CD14-positive monocyte (primary cell): ENCODE measurements at regions of chr16 and their contacts with region 1.

Region 1: DNA sequence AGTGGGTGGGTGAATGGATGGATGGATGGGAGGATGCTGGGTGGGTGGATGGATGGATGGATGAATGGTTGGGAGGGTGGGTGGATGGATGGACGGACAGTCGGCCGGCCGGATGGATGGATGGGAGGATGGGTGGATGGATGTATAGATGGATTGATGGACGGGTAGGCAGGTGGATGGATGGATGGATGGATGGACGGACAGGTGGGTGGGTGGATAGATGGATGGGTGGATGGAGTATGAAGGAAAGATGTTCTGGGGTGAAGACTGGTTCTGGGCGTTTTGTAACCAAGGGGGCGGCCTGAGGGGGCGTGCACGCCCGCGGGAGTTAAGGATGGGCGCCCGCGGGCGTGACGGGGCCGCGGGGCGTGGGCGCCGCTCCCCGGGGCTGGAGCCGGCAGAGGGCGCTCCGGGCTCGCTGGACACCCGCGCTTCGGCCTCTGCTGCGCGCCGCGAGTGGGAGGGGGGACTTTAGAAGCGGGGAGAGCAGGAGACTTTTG is at the start of gene NECAB2:
- DNase-seq: peak; percentile 43 to 64 (median 48)
- H3K4me3 ChIP-seq: no peak within 1 kb of the TSS
- H3K4me3 Mint-ChIP-seq: peak within 1 kb of the TSS; percentile 53 to 82
- H3K27ac ChIP-seq: no peak within 1 kb of the TSS
- H3K27ac Mint-ChIP-seq: peak within 1 kb of the TSS in 1 of 7 donors; percentile 3
- H3K4me1 ChIP-seq: no peaks in the 10 kb centered on the region
- H3K4me1 Mint-ChIP-seq: peaks cover 2% of the 10 kb centered on the region
- H3K27me3 ChIP-seq: peaks cover 6 to 32% of the 10 kb centered on the region in 2 donors
- H3K27me3 Mint-ChIP-seq: peaks cover 28 to 52% (median 40%) of the 10 kb centered on the region in 3 donors
- CTCF ChIP-seq: peak; percentile 78
- polyA plus RNA-seq, gene NECAB2: 0.33 to 1.4 (median 0.52) TPM

Region 2: GRCh38 chr16:83926726-83927397 is 41.0 kb before region 1 on chr16:
- intact Hi-C with region 1: no loop called
- DNase-seq: peak; percentile 25 to 46 (median 42)
- H3K4me3 ChIP-seq: no peak overlapping the region
- H3K4me3 Mint-ChIP-seq: no peak overlapping the region
- H3K27ac ChIP-seq: no peak overlapping the region
- H3K27ac Mint-ChIP-seq: no peak overlapping the region
- H3K4me1 ChIP-seq: no peaks in the 10 kb centered on the region
- H3K4me1 Mint-ChIP-seq: no peaks in the 10 kb centered on the region
- H3K27me3 ChIP-seq: no peaks in the 10 kb centered on the region
- H3K27me3 Mint-ChIP-seq: no peaks in the 10 kb centered on the region
- CTCF ChIP-seq: peak; percentile 99

Region 3: DNA sequence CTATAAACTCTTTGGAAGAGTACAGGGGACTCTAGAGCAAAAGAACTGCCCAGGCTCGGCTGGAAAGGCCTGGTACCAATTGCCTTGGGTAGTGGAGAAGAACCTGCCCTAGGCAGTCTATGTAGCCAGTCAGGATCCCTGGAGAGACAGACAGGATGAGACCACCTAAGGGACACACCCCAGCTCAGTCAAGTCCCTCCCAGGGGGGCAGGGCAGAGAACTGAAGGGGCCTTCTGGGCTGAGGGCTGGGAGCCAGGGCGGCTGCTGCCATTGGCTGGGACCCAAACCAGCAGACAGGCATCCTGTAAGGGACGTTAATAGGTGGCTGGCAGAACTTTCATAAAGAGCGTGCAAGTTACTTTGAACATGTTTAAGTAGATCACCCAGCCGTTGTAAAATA is 87.5 kb after region 1 on chr16:
- intact Hi-C with region 1: loop called in 1 of 2 experiments (anchors 5 kb)
- DNase-seq: no peak
- H3K4me3 ChIP-seq: no peak overlapping the region
- H3K4me3 Mint-ChIP-seq: no peak overlapping the region
- H3K27ac ChIP-seq: no peak overlapping the region
- H3K27ac Mint-ChIP-seq: no peak overlapping the region
- H3K4me1 ChIP-seq: no peaks in the 10 kb centered on the region
- H3K4me1 Mint-ChIP-seq: no peaks in the 10 kb centered on the region
- H3K27me3 ChIP-seq: no peaks in the 10 kb centered on the region
- H3K27me3 Mint-ChIP-seq: no peaks in the 10 kb centered on the region
- CTCF ChIP-seq: no peak

Region 4: GRCh38 chr16:84504420-84505248 is 536.8 kb after region 1 on chr16 and contains the start of gene MEAK7:
- intact Hi-C with region 1: loop called in 1 of 2 experiments (anchors 10 kb)
- DNase-seq: peak; percentile 97 to 98 (median 98)
- H3K4me3 ChIP-seq: peak within 1 kb of the TSS; percentile 71 to 95 (median 91)
- H3K4me3 Mint-ChIP-seq: peak within 1 kb of the TSS; percentile 81 to 87
- H3K27ac ChIP-seq: peak within 1 kb of the TSS; percentile 30 to 86
- H3K27ac Mint-ChIP-seq: peak within 1 kb of the TSS; percentile 35 to 86 (median 76)
- H3K4me1 ChIP-seq: peaks cover 37 to 44% of the 10 kb centered on the region in 2 donors
- H3K4me1 Mint-ChIP-seq: peaks cover 26% of the 10 kb centered on the region
- H3K27me3 ChIP-seq: no peaks in the 10 kb centered on the region
- H3K27me3 Mint-ChIP-seq: peaks cover 0 to 4% (median 2%) of the 10 kb centered on the region in 3 donors
- CTCF ChIP-seq: no peak
- polyA plus RNA-seq, gene MEAK7: 2.5 to 5.0 (median 4.7) TPM